Activated B cell treated with CpG ODN at 0.5 μM for 24 hours (primary cell): ENCODE measurements at regions of chr11 and their contacts with region 1.

Region 1: GRCh38 chr11:8682303-8683114 is at the starts of genes RPL27A and TRIM66:
- DNase-seq: peak; percentile 99
- ATAC-seq: peak; percentile 94
- H3K4me3 Mint-ChIP-seq: peak within 1 kb of the TSS; percentile 94
- H3K27ac Mint-ChIP-seq: peak within 1 kb of the TSS; percentile 96
- H3K4me1 Mint-ChIP-seq: peaks cover 45% of the 10 kb centered on the region
- H3K27me3 Mint-ChIP-seq: no peaks in the 10 kb centered on the region
- CTCF ChIP-seq: no peak
- total RNA-seq, gene RPL27A: 1,592 and 2,225 TPM in 2 replicates
- total RNA-seq, gene TRIM66: 12.4 and 13.3 TPM in 2 replicates

Region 2: GRCh38 chr11:8201644-8202365 is 480.7 kb before region 1 on chr11:
- CTCF ChIA-PET with region 1: no interaction called
- POLR2A ChIA-PET with region 1: interaction called, 6 read pairs
- intact Hi-C with region 1: loop called (anchors 1 kb)
- DNase-seq: peak; percentile 36
- ATAC-seq: peak; percentile 85
- H3K4me3 Mint-ChIP-seq: peak overlapping the region; percentile 16
- H3K27ac Mint-ChIP-seq: peak overlapping the region; percentile 87
- H3K4me1 Mint-ChIP-seq: peaks cover 74% of the 10 kb centered on the region
- H3K27me3 Mint-ChIP-seq: no peaks in the 10 kb centered on the region
- CTCF ChIP-seq: no peak

Region 3: GRCh38 chr11:8732748-8733241 is 50.3 kb after region 1 on chr11:
- CTCF ChIA-PET with region 1: no interaction called
- POLR2A ChIA-PET with region 1: interaction called, 11 read pairs
- intact Hi-C with region 1: loop called (anchors 1 kb)
- DNase-seq: no peak
- ATAC-seq: peak; percentile 18
- H3K4me3 Mint-ChIP-seq: peak overlapping the region; percentile 69
- H3K27ac Mint-ChIP-seq: peak overlapping the region; percentile 90
- H3K4me1 Mint-ChIP-seq: peaks cover 34% of the 10 kb centered on the region
- H3K27me3 Mint-ChIP-seq: no peaks in the 10 kb centered on the region
- CTCF ChIP-seq: no peak

Region 4: GRCh38 chr11:8822476-8822875 is 140.0 kb after region 1 on chr11:
- CTCF ChIA-PET with region 1: no interaction called
- POLR2A ChIA-PET with region 1: no interaction called
- intact Hi-C with region 1: no loop called
- DNase-seq: no peak
- ATAC-seq: no peak
- H3K4me3 Mint-ChIP-seq: no peak overlapping the region
- H3K27ac Mint-ChIP-seq: no peak overlapping the region
- H3K4me1 Mint-ChIP-seq: no peaks in the 10 kb centered on the region
- H3K27me3 Mint-ChIP-seq: peaks cover 3% of the 10 kb centered on the region
- CTCF ChIP-seq: no peak

Region 5: DNA sequence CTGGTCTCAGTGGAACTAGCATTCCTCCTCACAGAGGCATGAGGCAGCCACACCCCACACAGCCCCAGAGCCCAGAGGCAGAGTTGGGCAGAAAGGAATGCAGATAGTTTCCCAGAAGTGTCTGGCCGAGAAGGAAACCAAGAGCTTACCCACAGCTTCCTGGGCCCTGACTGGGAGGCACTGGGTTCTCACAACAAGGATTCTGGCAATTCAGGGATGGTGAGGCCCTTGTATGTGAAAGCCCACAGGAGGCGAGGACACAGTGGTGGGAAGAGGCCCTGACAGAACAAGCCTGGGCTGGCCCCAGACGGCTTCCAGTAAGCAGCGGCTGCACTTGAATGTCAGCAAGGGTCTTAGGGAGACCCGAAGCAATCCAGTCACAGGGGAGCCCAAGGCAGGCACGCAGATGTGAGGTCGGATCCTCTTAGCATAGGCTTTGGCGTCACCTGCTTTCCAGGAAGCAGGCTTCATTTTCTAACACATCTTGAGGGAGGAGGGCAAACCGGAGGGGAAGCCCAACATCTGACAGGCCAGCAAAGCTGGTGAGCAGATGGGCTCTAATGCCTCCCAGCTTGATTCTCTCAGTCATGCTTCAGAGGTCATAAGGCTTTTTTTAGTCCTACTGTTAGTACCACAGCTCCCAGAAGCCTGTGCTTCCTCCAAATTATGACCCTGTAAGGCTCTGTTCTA is 150.2 kb after region 1 on chr11:
- CTCF ChIA-PET with region 1: no interaction called
- POLR2A ChIA-PET with region 1: interaction called, 11 read pairs
- intact Hi-C with region 1: no loop called
- DNase-seq: peak; percentile 22
- ATAC-seq: peak; percentile 96
- H3K4me3 Mint-ChIP-seq: no peak overlapping the region
- H3K27ac Mint-ChIP-seq: peak overlapping the region; percentile 74
- H3K4me1 Mint-ChIP-seq: peaks cover 16% of the 10 kb centered on the region
- H3K27me3 Mint-ChIP-seq: no peaks in the 10 kb centered on the region
- CTCF ChIP-seq: no peak